ENCODE measurements at regions of chr6 and their contacts with region 1.

Region 1: GRCh38 chr6:124795643-124796463 is 166.4 kb upstream of the RNF217 start:
- H3K4me3 Mint-ChIP-seq: no peak overlapping the region
- H3K27ac Mint-ChIP-seq: no peak overlapping the region
- H3K4me1 Mint-ChIP-seq: no peaks in the 10 kb centered on the region
- H3K27me3 Mint-ChIP-seq: peaks cover 2% of the 10 kb centered on the region

Region 2: GRCh38 chr6:123415844-123416468 is 1379.9 kb before region 1 on chr6:
- intact Hi-C with region 1: loop called (anchors 5 kb)
- H3K4me3 Mint-ChIP-seq: no peak overlapping the region
- H3K27ac Mint-ChIP-seq: no peak overlapping the region
- H3K4me1 Mint-ChIP-seq: no peaks in the 10 kb centered on the region
- H3K27me3 Mint-ChIP-seq: no peaks in the 10 kb centered on the region

Region 3: GRCh38 chr6:123802697-123803496 is 993.0 kb before region 1 on chr6:
- intact Hi-C with region 1: loop called (anchors 2 kb)
- H3K4me3 Mint-ChIP-seq: peak overlapping the region; percentile 77
- H3K27ac Mint-ChIP-seq: no peak overlapping the region
- H3K4me1 Mint-ChIP-seq: peaks cover 18% of the 10 kb centered on the region
- H3K27me3 Mint-ChIP-seq: peaks cover 30% of the 10 kb centered on the region

Measured in dendritic cell treated with granulocyte-macrophage colony-stimulating factor and Interleukin-4, amounts not matched to agents 40 ng/mL and 50 ng/mL, for 4 days (primary cell).